K562 (cell line): ENCODE measurements at regions of chr13 and their contacts with region 1.

Region 1: DNA sequence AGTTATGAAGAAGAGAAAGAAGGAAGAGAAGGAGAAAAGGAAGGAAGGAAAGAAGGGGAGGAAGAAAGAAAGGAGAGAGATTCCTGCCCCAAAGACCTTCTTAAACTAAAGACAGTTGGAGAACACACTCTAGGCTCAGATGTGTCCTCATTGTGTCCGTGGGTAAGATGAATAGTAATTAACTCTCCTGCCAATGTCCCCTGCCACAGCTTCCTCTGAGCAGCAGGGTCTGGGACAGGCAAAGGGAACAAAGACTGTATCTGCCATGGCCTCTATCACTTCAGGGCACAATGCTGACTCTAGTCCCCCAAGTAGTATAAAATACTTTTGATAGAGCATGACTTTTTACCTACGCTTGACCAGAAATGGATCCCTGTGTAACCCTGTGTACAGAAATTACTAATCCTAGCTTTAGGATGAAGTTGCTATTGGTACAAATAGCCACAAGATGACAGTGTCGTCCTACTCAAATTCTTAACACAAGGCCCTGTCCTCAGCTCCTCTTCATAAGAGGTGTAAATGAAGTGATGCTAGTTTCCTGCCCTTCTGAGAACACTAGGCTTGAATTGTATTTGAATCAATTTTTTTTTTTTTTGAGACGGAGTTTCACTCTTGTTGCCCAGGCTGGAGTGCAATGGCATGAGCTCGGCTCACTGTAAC is 186.2 kb upstream of the GPR12 start:
- DNase-seq: peak; percentile 39 to 66 (median 48)
- ATAC-seq: peak; percentile 93
- H3K4me3 ChIP-seq: no peak overlapping the region
- H3K27ac ChIP-seq: no peak overlapping the region
- H3K4me1 ChIP-seq: peaks cover under 1 to 13% of the 10 kb centered on the region in 2 experiments; a peak in 4 of 5 replicates
- H3K27me3 ChIP-seq: peaks cover 0 to 4% of the 10 kb centered on the region in 2 experiments; a peak in 1 of 5 replicates
- CTCF ChIP-seq: peak; percentile 51 to 90 (median 77)
- EP300 ChIP-seq: no peak
- POLR2A ChIP-seq: no peak
- RAD21 ChIP-seq: peak; percentile 85 to 94

Region 2: GRCh38 chr13:26957182-26957581 is 10.4 kb after region 1 on chr13:
- CTCF ChIA-PET with region 1: no interaction called
- POLR2A ChIA-PET with region 1: interaction called, 10 read pairs
- in situ Hi-C with region 1: no loop called
- intact Hi-C with region 1: no loop called
- DNase-seq: no peak
- ATAC-seq: peak; percentile 59
- H3K4me3 ChIP-seq: no peak overlapping the region
- H3K27ac ChIP-seq: no peak overlapping the region
- H3K4me1 ChIP-seq: peaks cover 8 to 12% of the 10 kb centered on the region in 2 experiments; a peak in 4 of 5 replicates
- H3K27me3 ChIP-seq: no peaks in the 10 kb centered on the region
- CTCF ChIP-seq: no peak
- EP300 ChIP-seq: no peak
- POLR2A ChIP-seq: no peak
- RAD21 ChIP-seq: no peak

Region 3: GRCh38 chr13:26985285-26985878 is 38.6 kb after region 1 on chr13:
- CTCF ChIA-PET with region 1: interaction called, 4 read pairs
- POLR2A ChIA-PET with region 1: interaction called, 6 read pairs
- in situ Hi-C with region 1: loop called (anchors 5 kb)
- intact Hi-C with region 1: loop called (anchors 1 kb)
- DNase-seq: peak; percentile 53 to 81 (median 63)
- ATAC-seq: peak; percentile 68
- H3K4me3 ChIP-seq: no peak overlapping the region
- H3K27ac ChIP-seq: no peak overlapping the region
- H3K4me1 ChIP-seq: peaks cover 28 to 29% of the 10 kb centered on the region in 2 experiments
- H3K27me3 ChIP-seq: no peaks in the 10 kb centered on the region; a peak in 1 of 5 replicates
- CTCF ChIP-seq: peak; percentile 68 to 83 (median 76)
- EP300 ChIP-seq: no peak
- POLR2A ChIP-seq: no peak
- RAD21 ChIP-seq: peak; percentile 84 to 91

Region 4: DNA sequence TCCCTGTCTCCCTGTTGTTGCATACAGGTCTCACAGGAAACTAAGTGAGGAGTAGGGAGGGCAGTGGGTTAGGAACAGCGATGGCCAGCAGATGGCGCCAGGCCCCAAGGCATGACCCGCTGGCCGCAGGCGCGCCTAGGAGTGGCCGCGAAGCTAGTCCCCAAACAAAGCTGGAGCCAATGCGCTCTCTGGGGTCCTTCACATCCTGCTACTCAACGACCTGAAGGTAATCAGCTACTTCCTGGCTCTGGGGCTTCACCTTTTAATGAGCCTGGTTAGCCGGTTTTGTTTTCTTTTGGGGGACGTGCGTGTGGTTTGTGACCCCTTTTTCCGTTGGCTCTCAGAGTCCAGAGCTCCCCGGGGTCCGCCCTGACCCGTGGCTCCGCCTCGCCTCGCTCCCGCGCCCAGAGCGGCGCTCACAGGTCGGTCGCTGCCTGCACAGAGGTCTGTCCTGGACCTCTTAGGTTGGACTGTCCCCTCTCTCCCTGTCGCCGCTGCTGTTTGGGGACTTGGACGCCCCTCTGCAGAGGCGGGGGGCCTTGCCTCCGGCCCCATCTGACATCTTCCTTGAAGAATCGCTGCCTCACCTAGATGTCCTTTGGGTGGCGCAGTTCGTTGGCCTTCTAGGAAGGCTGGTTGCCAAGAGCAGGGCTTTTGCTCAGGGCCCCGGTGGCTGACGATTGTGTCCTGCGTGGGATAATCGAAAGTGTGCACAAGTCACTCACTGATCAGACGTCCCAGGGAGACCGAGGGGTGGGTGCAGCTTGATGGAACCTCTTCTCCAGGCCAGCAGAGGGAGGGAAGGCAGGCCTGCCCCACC is 415.5 kb after region 1 on chr13:
- CTCF ChIA-PET with region 1: interaction called, 32 read pairs
- POLR2A ChIA-PET with region 1: interaction called, 7 read pairs
- in situ Hi-C with region 1: loop called (anchors 5 kb)
- intact Hi-C with region 1: loop called (anchors 1 kb)
- DNase-seq: peak; percentile 82 to 83 (median 82)
- ATAC-seq: peak; percentile 97
- H3K4me3 ChIP-seq: peak overlapping the region; percentile 30
- H3K27ac ChIP-seq: no peak overlapping the region
- H3K4me1 ChIP-seq: peaks cover 0 to 7% of the 10 kb centered on the region in 2 experiments; a peak in 2 of 5 replicates
- H3K27me3 ChIP-seq: peaks cover 7 to 19% of the 10 kb centered on the region in 2 experiments; a peak in 4 of 5 replicates
- CTCF ChIP-seq: peak; percentile 86 to 90 (median 90)
- EP300 ChIP-seq: no peak
- POLR2A ChIP-seq: no peak
- RAD21 ChIP-seq: peak; percentile 72 to 86

Region 5: DNA sequence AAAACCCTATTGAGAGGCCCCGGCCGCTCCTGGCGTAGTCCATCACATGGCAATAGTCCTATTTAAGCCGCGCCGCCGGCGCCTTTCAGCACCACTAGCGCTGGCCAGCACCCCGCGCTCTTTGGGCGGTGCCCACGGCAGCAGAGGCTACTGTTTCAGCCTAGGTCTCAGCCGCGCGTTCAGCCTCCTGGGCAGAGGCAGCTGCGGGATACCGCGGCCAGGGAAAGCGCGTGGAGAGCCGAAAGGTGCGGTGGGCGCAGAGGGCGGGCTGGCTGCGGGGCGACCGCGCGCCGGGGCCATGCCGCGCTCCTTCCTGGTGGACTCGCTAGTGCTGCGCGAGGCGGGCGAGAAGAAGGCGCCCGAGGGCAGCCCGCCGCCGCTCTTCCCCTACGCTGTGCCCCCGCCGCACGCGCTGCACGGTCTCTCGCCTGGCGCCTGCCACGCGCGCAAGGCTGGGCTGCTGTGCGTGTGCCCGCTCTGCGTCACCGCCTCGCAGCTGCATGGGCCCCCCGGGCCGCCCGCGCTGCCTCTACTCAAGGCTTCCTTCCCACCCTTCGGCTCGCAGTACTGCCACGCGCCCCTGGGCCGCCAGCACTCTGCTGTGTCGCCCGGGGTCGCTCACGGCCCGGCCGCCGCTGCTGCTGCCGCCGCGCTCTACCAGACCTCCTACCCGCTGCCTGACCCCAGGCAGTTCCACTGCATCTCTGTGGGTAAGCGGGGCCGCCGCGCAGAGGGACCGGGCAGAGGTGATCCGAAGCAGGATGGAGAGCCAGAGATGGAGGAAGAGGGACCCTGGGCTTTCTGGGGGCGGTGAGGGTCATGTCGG is 845.8 kb after region 1 on chr13 and contains the start of gene GSX1:
- CTCF ChIA-PET with region 1: no interaction called
- POLR2A ChIA-PET with region 1: no interaction called
- in situ Hi-C with region 1: no loop called
- intact Hi-C with region 1: no loop called
- DNase-seq: peak in 3 of 4 experiments; percentile 17 to 21 (median 20)
- ATAC-seq: peak; percentile 62; the same call in 2 of the 3 replicates
- H3K4me3 ChIP-seq: no peak within 1 kb of the TSS
- H3K27ac ChIP-seq: no peak within 1 kb of the TSS
- H3K4me1 ChIP-seq: peaks cover 0 to 6% of the 10 kb centered on the region in 2 experiments; a peak in 2 of 5 replicates
- H3K27me3 ChIP-seq: peaks cover 26 to 76% of the 10 kb centered on the region in 2 experiments
- CTCF ChIP-seq: no peak
- EP300 ChIP-seq: no peak
- POLR2A ChIP-seq: no peak
- RAD21 ChIP-seq: no peak
- polyA plus RNA-seq, gene GSX1: not detected

Region 6: GRCh38 chr13:27980280-27980998 is 1033.6 kb after region 1 on chr13:
- CTCF ChIA-PET with region 1: no interaction called
- POLR2A ChIA-PET with region 1: no interaction called
- in situ Hi-C with region 1: loop called (anchors 10 kb)
- intact Hi-C with region 1: no loop called
- DNase-seq: no peak
- ATAC-seq: no peak
- H3K4me3 ChIP-seq: no peak overlapping the region
- H3K27ac ChIP-seq: no peak overlapping the region
- H3K4me1 ChIP-seq: 0 out of 5 replicates have a peak, but pooled peaks cover 0 to 3% of the 10 kb centered on the region in 2 experiments
- H3K27me3 ChIP-seq: peaks cover 3 to 39% of the 10 kb centered on the region in 2 experiments; a peak in 4 of 5 replicates
- CTCF ChIP-seq: no peak
- EP300 ChIP-seq: no peak
- POLR2A ChIP-seq: no peak
- RAD21 ChIP-seq: no peak